ENCODE measurements at regions of chr1 and their contacts with region 1.

Region 1: DNA sequence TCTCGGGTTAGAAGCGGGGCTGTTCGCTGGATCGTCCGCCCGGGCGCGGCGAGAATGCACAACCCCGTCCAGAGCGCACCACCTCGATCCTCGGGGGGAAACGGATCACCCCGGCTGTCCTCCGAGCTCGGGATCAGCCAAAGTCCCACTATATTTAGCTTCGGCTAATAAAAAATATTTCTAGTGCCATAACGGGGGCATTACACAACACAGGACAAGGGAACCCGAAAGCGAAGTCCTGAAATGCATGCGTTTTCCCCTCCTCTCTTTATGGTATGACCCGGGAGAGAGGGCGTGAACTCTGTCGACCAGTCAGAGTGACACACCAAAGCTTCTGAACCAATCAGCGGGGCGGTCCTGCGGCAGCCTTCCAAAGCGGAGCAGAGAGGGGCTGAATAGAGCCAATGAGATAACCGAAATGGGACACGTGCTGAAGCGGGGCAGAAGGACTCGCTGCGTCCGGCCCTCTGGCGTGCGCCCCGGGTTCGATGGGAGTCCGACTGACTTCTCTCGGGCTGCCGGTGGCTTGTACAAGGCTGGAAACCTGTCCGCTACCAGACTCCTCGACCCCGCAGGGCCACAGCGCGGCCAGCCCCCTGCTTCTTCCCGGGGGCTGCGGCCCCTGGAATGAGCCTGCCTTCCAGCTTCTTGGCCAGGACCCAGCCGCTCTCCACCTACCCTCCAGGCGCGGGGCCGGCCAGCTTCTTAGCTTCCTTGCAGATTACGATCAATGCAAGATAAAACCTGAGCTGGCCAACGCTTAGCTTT is at the start of gene ALDH4A1:
- DNase-seq: peak; percentile 98 to 99
- ATAC-seq: peak; percentile 97
- H3K4me3 ChIP-seq: peak within 1 kb of the TSS; percentile 57 to 82
- H3K27ac ChIP-seq: peak within 1 kb of the TSS; percentile 12 to 71
- H3K4me1 ChIP-seq: peaks cover 0 to 2% of the 10 kb centered on the region in 2 donors
- H3K27me3 ChIP-seq: no peaks in the 10 kb centered on the region
- total RNA-seq, gene ALDH4A1: 9.3 to 12.7 TPM

Region 2: GRCh38 chr1:18575620-18576019 is 327.1 kb before region 1 on chr1:
- intact Hi-C with region 1: no loop called
- DNase-seq: peak; percentile 59 to 67
- ATAC-seq: peak; percentile 6
- H3K4me3 ChIP-seq: no peak overlapping the region
- H3K27ac ChIP-seq: no peak overlapping the region
- H3K4me1 ChIP-seq: no peaks in the 10 kb centered on the region
- H3K27me3 ChIP-seq: no peaks in the 10 kb centered on the region

Region 3: GRCh38 chr1:18949686-18950400 is 47.1 kb after region 1 on chr1:
- intact Hi-C with region 1: loop called in 1 of 2 experiments (anchors 5 kb)
- DNase-seq: peak in 1 of 2 donors; percentile 70
- ATAC-seq: peak; percentile 65
- H3K4me3 ChIP-seq: peak overlapping the region; percentile 3 to 8
- H3K27ac ChIP-seq: peak overlapping the region; percentile 67 to 97
- H3K4me1 ChIP-seq: peaks cover 0 to 4% of the 10 kb centered on the region in 2 donors
- H3K27me3 ChIP-seq: no peaks in the 10 kb centered on the region

Region 4: DNA sequence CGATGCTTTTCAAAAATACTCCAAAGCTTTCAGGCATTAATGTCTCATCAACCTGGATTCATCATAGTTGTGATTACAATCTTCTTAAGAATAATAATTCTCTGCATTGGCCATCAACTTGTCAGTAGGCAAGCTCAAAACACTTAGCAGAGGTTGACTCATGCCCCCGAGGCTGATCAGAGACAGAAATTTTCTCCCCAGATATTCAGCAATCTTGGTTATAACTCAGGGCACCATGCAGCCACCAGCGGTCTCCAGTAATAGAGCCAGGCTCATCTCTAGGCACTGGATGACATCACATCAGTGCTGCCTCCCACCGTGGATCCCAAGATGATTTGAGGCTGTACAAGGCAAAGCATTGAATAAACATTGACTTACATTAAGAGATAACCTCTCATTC is 68.1 kb after region 1 on chr1:
- intact Hi-C with region 1: loop called in 1 of 2 experiments (anchors 2 kb)
- DNase-seq: peak in 1 of 2 donors; percentile 9
- ATAC-seq: no peak
- H3K4me3 ChIP-seq: no peak overlapping the region
- H3K27ac ChIP-seq: no peak overlapping the region
- H3K4me1 ChIP-seq: no peaks in the 10 kb centered on the region
- H3K27me3 ChIP-seq: no peaks in the 10 kb centered on the region

Region 5: GRCh38 chr1:19074902-19075721 is 172.4 kb after region 1 on chr1:
- intact Hi-C with region 1: loop called in 1 of 2 experiments (anchors 5 kb)
- DNase-seq: peak; percentile 66 to 80
- ATAC-seq: peak; percentile 37
- H3K4me3 ChIP-seq: no peak overlapping the region
- H3K27ac ChIP-seq: no peak overlapping the region
- H3K4me1 ChIP-seq: no peaks in the 10 kb centered on the region
- H3K27me3 ChIP-seq: no peaks in the 10 kb centered on the region

Region 6: GRCh38 chr1:19091196-19091953 is 188.7 kb after region 1 on chr1:
- intact Hi-C with region 1: loop called (anchors 5 kb)
- DNase-seq: no peak
- ATAC-seq: no peak
- H3K4me3 ChIP-seq: no peak overlapping the region
- H3K27ac ChIP-seq: no peak overlapping the region
- H3K4me1 ChIP-seq: no peaks in the 10 kb centered on the region
- H3K27me3 ChIP-seq: no peaks in the 10 kb centered on the region